Activated CD4-positive, alpha-beta T cell treated with anti-CD3 and anti-CD28 coated beads, Interleukin-2, amount 10 ng/mL, durations not matched to agents 24 days and 14 days (primary cell): ENCODE measurements at regions of chr9 and their contacts with region 1.

Region 1: GRCh38 chr9:19174127-19174912 is 47.0 kb upstream of the PLIN2 start:
- DNase-seq: peak; percentile 80
- H3K4me3 Mint-ChIP-seq: peak overlapping the region; percentile 22
- H3K27ac Mint-ChIP-seq: peak overlapping the region; percentile 34
- H3K4me1 Mint-ChIP-seq: peaks cover 21% of the 10 kb centered on the region
- H3K27me3 Mint-ChIP-seq: no peaks in the 10 kb centered on the region

Region 2: GRCh38 chr9:19048966-19049916 is 125.1 kb before region 1 on chr9 and contains the start of gene RRAGA:
- intact Hi-C with region 1: loop called (anchors 1 kb)
- DNase-seq: peak; percentile 99
- H3K4me3 Mint-ChIP-seq: peak within 1 kb of the TSS; percentile 95
- H3K27ac Mint-ChIP-seq: peak within 1 kb of the TSS; percentile 99
- H3K4me1 Mint-ChIP-seq: peaks cover 32% of the 10 kb centered on the region
- H3K27me3 Mint-ChIP-seq: no peaks in the 10 kb centered on the region
- total RNA-seq, gene RRAGA: 54.1 and 54.3 TPM in 2 replicates

Region 3: DNA sequence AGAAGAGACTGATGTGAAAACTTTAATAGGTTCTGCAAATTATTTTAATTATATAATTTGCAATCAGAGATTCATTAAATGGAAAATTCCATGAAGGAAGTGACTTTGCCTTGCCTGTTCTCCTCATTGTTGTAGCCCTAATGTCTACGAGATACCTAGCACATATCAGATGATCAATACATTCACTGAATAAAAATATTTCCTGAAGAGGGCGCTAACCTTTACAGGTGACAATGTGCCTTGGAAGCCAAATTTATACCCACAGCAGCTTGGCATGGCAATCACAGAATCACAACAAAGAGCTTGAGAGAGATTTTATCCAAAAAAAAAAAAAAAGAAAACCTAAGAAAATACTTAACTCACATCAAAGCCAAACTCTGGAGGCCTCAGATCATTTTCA is 89.0 kb before region 1 on chr9:
- intact Hi-C with region 1: loop called (anchors 1 kb)
- DNase-seq: peak; percentile 70
- H3K4me3 Mint-ChIP-seq: no peak overlapping the region
- H3K27ac Mint-ChIP-seq: peak overlapping the region; percentile 51
- H3K4me1 Mint-ChIP-seq: peaks cover 5% of the 10 kb centered on the region
- H3K27me3 Mint-ChIP-seq: no peaks in the 10 kb centered on the region

Region 4: DNA sequence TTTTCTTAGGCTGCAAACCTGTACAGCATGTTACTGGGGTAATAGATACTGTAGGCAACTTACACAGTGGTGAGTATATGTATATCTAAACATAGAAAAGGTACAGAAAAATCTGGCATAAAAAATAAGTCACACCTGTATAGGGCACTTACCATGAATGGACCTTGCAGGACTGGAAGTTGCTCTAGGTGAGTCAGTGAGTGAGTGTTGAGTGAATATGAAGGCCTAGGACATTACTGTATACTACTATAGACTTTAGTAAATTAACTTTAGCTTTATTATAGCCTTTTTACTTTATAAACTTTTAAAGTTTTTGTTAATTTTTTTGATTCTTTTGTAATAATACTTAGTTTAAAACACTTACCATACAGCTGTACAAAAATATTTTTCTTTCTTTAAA is 107.5 kb after region 1 on chr9:
- intact Hi-C with region 1: no loop called
- DNase-seq: no peak
- H3K4me3 Mint-ChIP-seq: no peak overlapping the region
- H3K27ac Mint-ChIP-seq: no peak overlapping the region
- H3K4me1 Mint-ChIP-seq: peaks cover 1% of the 10 kb centered on the region
- H3K27me3 Mint-ChIP-seq: no peaks in the 10 kb centered on the region